Activated CD4-positive, alpha-beta T cell treated with anti-CD3 and anti-CD28 coated beads for 36 hours (primary cell): ENCODE measurements at regions of chr12 and their contacts with region 1.

Region 1: DNA sequence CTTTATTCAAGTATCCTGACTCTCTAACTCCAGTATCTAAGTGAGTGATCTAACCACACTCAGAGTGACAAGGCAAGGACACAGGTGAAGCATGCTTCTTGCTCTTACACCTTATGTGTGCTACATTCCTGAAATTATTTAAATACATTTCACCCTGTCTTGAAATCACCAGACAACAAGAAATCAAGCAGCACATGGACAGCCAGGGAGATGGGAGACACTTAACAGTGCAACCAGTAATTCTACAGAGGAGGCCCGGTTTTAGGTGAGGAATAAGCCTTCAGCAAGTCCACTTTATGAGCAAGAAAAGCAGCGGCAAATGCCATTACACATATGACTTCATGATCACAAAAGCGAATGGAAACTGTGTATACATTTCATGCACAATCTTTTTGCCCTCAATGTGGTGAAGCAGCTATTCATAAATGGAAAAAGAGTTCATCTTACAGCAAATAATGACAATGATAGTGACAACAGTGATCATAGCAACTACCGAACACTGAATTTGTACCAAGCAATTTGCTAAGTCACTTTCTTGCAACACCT is 37.3 kb downstream of the PHLDA1 start:
- DNase-seq: peak; percentile 53
- ATAC-seq: peak; percentile 86
- H3K4me3 Mint-ChIP-seq: no peak overlapping the region
- H3K27ac Mint-ChIP-seq: peak overlapping the region; percentile 34
- H3K4me1 Mint-ChIP-seq: peaks cover 26% of the 10 kb centered on the region
- H3K27me3 Mint-ChIP-seq: peaks cover 7% of the 10 kb centered on the region

Region 2: GRCh38 chr12:75913502-75914351 is 80.5 kb before region 1 on chr12:
- CTCF ChIA-PET with region 1: no interaction called
- POLR2A ChIA-PET with region 1: no interaction called
- intact Hi-C with region 1: loop called in 1 of 2 experiments (anchors 1 kb)
- DNase-seq: peak; percentile 74
- ATAC-seq: peak; percentile 94
- H3K4me3 Mint-ChIP-seq: no peak overlapping the region
- H3K27ac Mint-ChIP-seq: no peak overlapping the region
- H3K4me1 Mint-ChIP-seq: peaks cover 21% of the 10 kb centered on the region
- H3K27me3 Mint-ChIP-seq: peaks cover 1% of the 10 kb centered on the region

Region 3: GRCh38 chr12:76012644-76013043 is 18.4 kb after region 1 on chr12:
- CTCF ChIA-PET with region 1: interaction called, 6 read pairs
- POLR2A ChIA-PET with region 1: no interaction called
- intact Hi-C with region 1: loop called in 1 of 2 experiments (anchors 2 kb)
- DNase-seq: no peak
- ATAC-seq: no peak
- H3K4me3 Mint-ChIP-seq: no peak overlapping the region
- H3K27ac Mint-ChIP-seq: no peak overlapping the region
- H3K4me1 Mint-ChIP-seq: peaks cover 14% of the 10 kb centered on the region
- H3K27me3 Mint-ChIP-seq: peaks cover 1% of the 10 kb centered on the region

Region 4: GRCh38 chr12:76020731-76021672 is 26.7 kb after region 1 on chr12:
- CTCF ChIA-PET with region 1: interaction called, 6 read pairs
- POLR2A ChIA-PET with region 1: interaction called, 3 read pairs
- intact Hi-C with region 1: loop called (anchors 1 kb)
- DNase-seq: peak; percentile 88
- ATAC-seq: peak; percentile 79
- H3K4me3 Mint-ChIP-seq: peak overlapping the region; percentile 54
- H3K27ac Mint-ChIP-seq: peak overlapping the region; percentile 99
- H3K4me1 Mint-ChIP-seq: peaks cover 56% of the 10 kb centered on the region
- H3K27me3 Mint-ChIP-seq: peaks cover 1% of the 10 kb centered on the region

Region 5: GRCh38 chr12:76083904-76084862 is 89.9 kb after region 1 on chr12 and contains the start of gene NAP1L1:
- CTCF ChIA-PET with region 1: no interaction called
- POLR2A ChIA-PET with region 1: no interaction called
- intact Hi-C with region 1: no loop called
- DNase-seq: peak; percentile 98
- ATAC-seq: peak; percentile 86
- H3K4me3 Mint-ChIP-seq: peak within 1 kb of the TSS; percentile 79
- H3K27ac Mint-ChIP-seq: peak within 1 kb of the TSS; percentile 98
- H3K4me1 Mint-ChIP-seq: peaks cover 44% of the 10 kb centered on the region
- H3K27me3 Mint-ChIP-seq: no peaks in the 10 kb centered on the region
- total RNA-seq, gene NAP1L1: 959 to 1,004 TPM